A673 (cell line): ENCODE measurements at regions of chr11 and their contacts with region 1.

Region 1: GRCh38 chr11:15327786-15328231 is 213.1 kb downstream of the INSC start:
- DNase-seq: peak; percentile 77
- H3K4me3 ChIP-seq: no peak overlapping the region
- H3K27ac ChIP-seq: no peak overlapping the region
- H3K4me1 ChIP-seq: peaks cover 7% of the 10 kb centered on the region
- H3K27me3 ChIP-seq: no peaks in the 10 kb centered on the region
- CTCF ChIP-seq: peak; percentile 75

Region 2: DNA sequence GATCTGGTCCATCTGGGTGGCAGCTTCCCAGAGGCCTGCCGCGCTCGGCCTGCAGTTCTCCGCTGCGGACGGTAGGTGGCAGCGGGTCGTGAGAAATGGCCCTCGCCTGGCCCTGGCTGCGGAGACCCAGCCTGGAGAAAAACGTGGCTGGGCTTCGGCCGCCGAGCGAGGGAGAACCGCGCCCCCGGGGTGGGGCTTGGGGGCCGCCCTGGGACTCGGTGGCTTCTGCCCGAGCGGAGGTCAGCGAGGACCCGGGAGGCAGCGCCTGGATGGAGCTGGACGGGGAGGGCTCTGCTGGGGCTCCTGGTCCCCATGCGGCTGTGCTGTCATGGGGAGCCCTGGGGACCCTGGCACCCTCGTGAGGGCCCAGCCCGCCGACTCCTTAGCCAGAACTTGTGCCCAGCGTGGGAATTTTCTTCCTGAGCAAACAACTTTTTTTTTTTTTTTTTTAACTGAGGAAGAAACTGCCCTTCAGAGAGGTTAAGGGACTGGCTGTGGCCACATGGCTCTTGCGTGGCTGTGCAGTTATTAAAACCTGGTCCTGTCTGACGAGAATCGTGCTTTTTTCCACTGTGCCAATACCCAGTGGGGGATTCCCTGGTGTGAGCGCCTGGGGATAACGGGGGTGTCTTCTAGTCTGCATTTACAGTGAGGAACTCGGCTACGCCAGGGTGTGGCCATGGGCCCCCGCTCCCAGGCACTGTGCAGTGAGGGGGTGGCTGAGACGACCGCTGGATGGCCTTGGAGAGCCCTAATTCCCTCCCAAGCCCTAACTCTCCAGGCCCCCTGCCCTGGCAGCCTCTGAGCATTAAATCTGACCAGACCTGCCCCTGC is 322.5 kb after region 1 on chr11:
- CTCF ChIA-PET with region 1: interaction called, 3 read pairs
- POLR2A ChIA-PET with region 1: no interaction called
- intact Hi-C with region 1: loop called (anchors 10 kb)
- DNase-seq: peak; percentile 92
- H3K4me3 ChIP-seq: peak overlapping the region; percentile 45
- H3K27ac ChIP-seq: peak overlapping the region; percentile 75
- H3K4me1 ChIP-seq: peaks cover 7% of the 10 kb centered on the region
- H3K27me3 ChIP-seq: no peaks in the 10 kb centered on the region
- CTCF ChIP-seq: peak; percentile 93

Region 3: DNA sequence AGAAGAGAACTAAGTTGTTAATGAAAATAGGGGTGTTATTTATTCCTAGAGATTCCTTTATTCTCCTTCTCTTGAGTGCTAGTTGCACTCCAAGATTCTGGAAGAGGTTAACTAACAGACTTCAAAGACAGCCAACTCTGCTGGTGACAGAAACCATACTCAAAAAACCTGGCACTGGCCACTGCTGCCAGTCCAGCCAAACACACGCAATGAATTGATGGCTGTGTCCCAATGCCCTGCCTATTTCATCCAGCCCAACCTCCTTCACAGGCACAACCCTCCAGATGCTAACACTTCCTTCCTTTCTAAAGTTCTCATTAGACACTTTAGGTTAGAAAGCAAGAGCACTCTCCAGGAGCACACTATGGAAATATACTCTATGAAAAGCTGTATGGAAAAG is 1259.9 kb after region 1 on chr11:
- CTCF ChIA-PET with region 1: interaction called, 16 read pairs
- POLR2A ChIA-PET with region 1: no interaction called
- intact Hi-C with region 1: no loop called
- DNase-seq: no peak
- H3K4me3 ChIP-seq: no peak overlapping the region
- H3K27ac ChIP-seq: no peak overlapping the region
- H3K4me1 ChIP-seq: no peaks in the 10 kb centered on the region
- H3K27me3 ChIP-seq: no peaks in the 10 kb centered on the region
- CTCF ChIP-seq: no peak